ENCODE measurements at regions of chr6 and their contacts with region 1.

Region 1: DNA sequence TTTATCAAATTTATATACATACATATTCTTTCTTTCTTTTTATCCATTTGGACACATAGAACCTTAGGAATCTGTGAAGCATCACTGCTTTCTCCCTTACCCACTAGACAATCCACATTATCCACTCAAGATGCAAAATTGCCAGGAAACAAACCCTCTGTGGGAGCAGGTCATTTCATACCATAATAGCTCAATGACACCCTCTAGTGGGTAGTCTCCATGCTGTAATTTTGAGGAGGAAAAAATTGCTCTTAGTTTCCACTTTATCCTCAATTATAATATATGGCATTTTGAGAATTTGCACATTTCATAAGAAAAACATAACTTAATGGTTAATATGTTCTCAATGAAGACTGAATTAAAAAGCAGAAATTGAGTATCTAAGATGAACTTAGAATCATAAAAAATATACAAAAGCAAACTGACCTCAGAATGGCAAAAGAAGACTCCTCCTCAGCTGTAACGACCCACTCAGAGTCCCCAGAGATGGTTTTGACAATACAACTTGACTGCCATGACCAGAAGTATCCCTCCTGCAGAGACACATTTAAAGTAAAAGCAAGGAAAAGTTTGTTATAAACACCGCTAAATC is 164.1 kb downstream of the FRK start:
- DNase-seq: peak; percentile 29
- ATAC-seq: peak; percentile 77
- H3K4me3 ChIP-seq: no peak overlapping the region
- H3K27ac ChIP-seq: no peak overlapping the region
- H3K4me1 ChIP-seq: no peaks in the 10 kb centered on the region
- H3K27me3 ChIP-seq: no peaks in the 10 kb centered on the region
- CTCF ChIP-seq: peak; percentile 79
- POLR2A ChIP-seq: no peak
- RAD21 ChIP-seq: peak; percentile 76

Region 2: GRCh38 chr6:114108119-114109002 is 1788.3 kb before region 1 on chr6:
- CTCF ChIA-PET with region 1: no interaction called
- POLR2A ChIA-PET with region 1: no interaction called
- dilution Hi-C with region 1: no loop called
- in situ Hi-C with region 1: no loop called
- intact Hi-C with region 1: loop called (anchors 10 kb)
- DNase-seq: peak; percentile 68
- ATAC-seq: peak; percentile 99
- H3K4me3 ChIP-seq: no peak overlapping the region
- H3K27ac ChIP-seq: no peak overlapping the region
- H3K4me1 ChIP-seq: no peaks in the 10 kb centered on the region
- H3K27me3 ChIP-seq: peaks cover 6% of the 10 kb centered on the region
- CTCF ChIP-seq: peak; percentile 86
- POLR2A ChIP-seq: no peak
- RAD21 ChIP-seq: peak; percentile 72

Region 3: GRCh38 chr6:114747987-114748630 is 1148.5 kb before region 1 on chr6:
- CTCF ChIA-PET with region 1: no interaction called
- POLR2A ChIA-PET with region 1: no interaction called
- dilution Hi-C with region 1: no loop called
- in situ Hi-C with region 1: loop called (anchors 10 kb)
- intact Hi-C with region 1: loop called (anchors 1 kb)
- DNase-seq: peak; percentile 45
- ATAC-seq: no peak
- H3K4me3 ChIP-seq: no peak overlapping the region
- H3K27ac ChIP-seq: no peak overlapping the region
- H3K4me1 ChIP-seq: no peaks in the 10 kb centered on the region
- H3K27me3 ChIP-seq: no peaks in the 10 kb centered on the region
- CTCF ChIP-seq: peak; percentile 66
- POLR2A ChIP-seq: no peak
- RAD21 ChIP-seq: peak; percentile 50

Region 4: DNA sequence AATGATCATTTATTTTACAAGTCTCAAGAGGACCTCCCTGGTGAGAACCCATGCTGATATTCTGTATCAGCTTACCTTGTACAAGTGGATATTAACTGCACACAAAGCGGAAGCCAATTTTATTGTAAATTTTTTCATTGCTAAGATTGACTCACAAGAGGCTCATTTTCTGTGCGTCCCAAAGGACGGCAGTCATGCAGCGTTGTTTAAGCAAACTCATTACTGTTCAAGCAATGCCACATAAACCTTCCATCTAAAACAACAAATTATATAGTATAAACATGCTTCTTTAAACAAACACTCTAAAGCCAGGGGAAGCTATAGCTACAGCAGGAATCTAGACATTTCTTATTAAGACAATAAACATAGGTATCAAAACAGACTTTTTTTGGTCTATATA is 411.2 kb before region 1 on chr6:
- CTCF ChIA-PET with region 1: interaction called, 6 read pairs
- POLR2A ChIA-PET with region 1: no interaction called
- dilution Hi-C with region 1: no loop called
- in situ Hi-C with region 1: no loop called
- intact Hi-C with region 1: loop called (anchors 5 kb)
- DNase-seq: peak; percentile 1
- ATAC-seq: peak; percentile 37
- H3K4me3 ChIP-seq: no peak overlapping the region
- H3K27ac ChIP-seq: no peak overlapping the region
- H3K4me1 ChIP-seq: no peaks in the 10 kb centered on the region
- H3K27me3 ChIP-seq: no peaks in the 10 kb centered on the region
- CTCF ChIP-seq: no peak
- POLR2A ChIP-seq: no peak
- RAD21 ChIP-seq: no peak

Region 5: DNA sequence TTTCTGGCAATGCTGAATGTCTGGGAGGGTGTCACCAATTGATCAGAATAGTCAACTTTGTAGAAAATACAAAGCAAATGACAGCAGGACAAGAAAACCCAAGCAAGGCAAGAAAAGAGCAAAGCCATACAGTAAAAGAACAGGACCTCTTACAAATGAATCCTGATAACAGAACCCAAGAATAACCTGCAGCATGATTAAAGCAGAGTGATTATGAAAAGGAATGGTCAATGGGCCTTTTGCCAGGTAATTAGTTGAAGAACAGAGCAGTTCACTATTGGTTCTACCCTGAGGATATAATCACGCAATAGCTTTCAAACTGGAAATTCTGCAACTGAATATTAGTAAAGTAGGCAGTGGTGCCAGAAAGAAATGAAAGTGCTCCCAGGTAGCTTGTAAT is 155.7 kb before region 1 on chr6:
- CTCF ChIA-PET with region 1: no interaction called
- POLR2A ChIA-PET with region 1: no interaction called
- dilution Hi-C with region 1: no loop called
- in situ Hi-C with region 1: no loop called
- intact Hi-C with region 1: loop called (anchors 2 kb)
- DNase-seq: no peak
- ATAC-seq: no peak
- H3K4me3 ChIP-seq: no peak overlapping the region
- H3K27ac ChIP-seq: no peak overlapping the region
- H3K4me1 ChIP-seq: no peaks in the 10 kb centered on the region
- H3K27me3 ChIP-seq: no peaks in the 10 kb centered on the region
- CTCF ChIP-seq: no peak
- POLR2A ChIP-seq: no peak
- RAD21 ChIP-seq: no peak

Region 6: GRCh38 chr6:115830895-115831294 is 65.7 kb before region 1 on chr6:
- CTCF ChIA-PET with region 1: interaction called, 10 read pairs
- POLR2A ChIA-PET with region 1: no interaction called
- dilution Hi-C with region 1: no loop called
- in situ Hi-C with region 1: no loop called
- intact Hi-C with region 1: no loop called
- DNase-seq: no peak
- ATAC-seq: no peak
- H3K4me3 ChIP-seq: no peak overlapping the region
- H3K27ac ChIP-seq: no peak overlapping the region
- H3K4me1 ChIP-seq: no peaks in the 10 kb centered on the region
- H3K27me3 ChIP-seq: no peaks in the 10 kb centered on the region
- CTCF ChIP-seq: no peak
- POLR2A ChIP-seq: no peak
- RAD21 ChIP-seq: no peak

Region 7: GRCh38 chr6:116100419-116101301 is 204.0 kb after region 1 on chr6 and contains the start of gene NT5DC1:
- CTCF ChIA-PET with region 1: no interaction called
- POLR2A ChIA-PET with region 1: no interaction called
- dilution Hi-C with region 1: no loop called
- in situ Hi-C with region 1: no loop called
- intact Hi-C with region 1: loop called (anchors 2 kb)
- DNase-seq: peak; percentile 67
- ATAC-seq: peak; percentile 96
- H3K4me3 ChIP-seq: peak within 1 kb of the TSS; percentile 89
- H3K27ac ChIP-seq: peak within 1 kb of the TSS; percentile 73
- H3K4me1 ChIP-seq: peaks cover 13% of the 10 kb centered on the region
- H3K27me3 ChIP-seq: no peaks in the 10 kb centered on the region
- CTCF ChIP-seq: no peak; the same call in none of the 2 replicates
- POLR2A ChIP-seq: no peak; the same call in 1 of the 2 replicates
- RAD21 ChIP-seq: peak; percentile 22; the same call in 1 of the 2 replicates
- total RNA-seq, gene NT5DC1: 7.5 and 11.7 TPM in 2 replicates

Measured in IMR-90 (cell line).